PC-9 (cell line): ENCODE measurements at regions of chr7 and their contacts with region 1.

Region 1: DNA sequence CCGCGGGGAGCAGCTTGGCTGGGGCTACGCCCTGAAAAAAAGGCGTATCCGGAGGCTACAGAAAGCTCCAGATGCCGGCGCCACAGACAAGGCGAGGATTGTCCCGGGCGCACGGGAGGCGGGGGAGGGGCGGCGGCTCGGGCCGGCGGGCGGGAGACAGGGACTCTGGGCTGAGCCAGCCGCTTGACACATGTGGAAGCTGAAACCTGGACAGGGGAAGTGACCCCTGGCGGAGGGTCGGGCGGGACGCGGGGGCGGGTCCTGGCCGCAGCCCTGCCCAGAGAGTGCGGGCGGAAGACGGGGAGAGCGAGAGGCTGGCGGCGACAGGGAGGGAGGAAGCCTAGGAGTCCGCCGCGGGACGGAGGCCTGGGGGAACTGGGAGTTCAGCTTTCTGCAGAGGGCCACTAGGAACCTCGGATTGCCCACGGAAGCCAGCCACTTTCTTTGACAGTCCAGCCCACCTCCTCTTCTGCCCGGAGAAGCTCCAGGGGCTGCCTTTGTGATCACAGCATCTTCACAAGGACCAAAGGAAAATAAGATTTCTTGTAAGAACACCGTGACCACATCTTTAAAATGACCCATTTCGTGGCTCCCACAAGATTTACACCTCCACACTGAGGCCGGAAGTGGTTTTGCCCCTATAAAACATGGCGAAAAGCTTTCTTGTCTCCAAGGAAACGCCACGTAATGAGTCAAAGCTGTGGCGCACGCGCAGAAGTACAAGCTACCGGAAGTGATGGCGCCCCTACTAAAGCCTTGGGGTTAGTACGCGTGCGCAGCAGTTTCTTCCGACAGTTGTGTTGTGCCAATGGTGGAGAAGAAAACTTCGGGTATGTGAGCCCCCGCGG is at the starts of genes PLOD3 and ZNHIT1:
- DNase-seq: peak; percentile 92 to 95
- H3K4me3 ChIP-seq: peak within 1 kb of the TSS; percentile 82
- H3K27ac ChIP-seq: peak within 1 kb of the TSS; percentile 80
- H3K4me1 ChIP-seq: 0 out of 2 replicates have a peak, but pooled peaks cover 12% of the 10 kb centered on the region
- H3K27me3 ChIP-seq: no peaks in the 10 kb centered on the region
- CTCF ChIP-seq: no peak
- total RNA-seq, gene PLOD3: 93.2 and 105 TPM in 2 replicates
- total RNA-seq, gene ZNHIT1: 105 and 110 TPM in 2 replicates

Region 2: GRCh38 chr7:100726996-100727761 is 490.4 kb before region 1 on chr7:
- CTCF ChIA-PET with region 1: interaction called, 17 read pairs
- POLR2A ChIA-PET with region 1: no interaction called
- intact Hi-C with region 1: no loop called
- DNase-seq: no peak
- H3K4me3 ChIP-seq: no peak overlapping the region
- H3K27ac ChIP-seq: no peak overlapping the region
- H3K4me1 ChIP-seq: peaks cover 19% of the 10 kb centered on the region
- H3K27me3 ChIP-seq: no peaks in the 10 kb centered on the region
- CTCF ChIP-seq: no peak

Region 3: GRCh38 chr7:101235050-101235449 is 17.4 kb after region 1 on chr7:
- CTCF ChIA-PET with region 1: interaction called, 4 read pairs
- POLR2A ChIA-PET with region 1: interaction called, 61 read pairs
- intact Hi-C with region 1: loop called (anchors 1 kb)
- DNase-seq: no peak
- H3K4me3 ChIP-seq: no peak overlapping the region
- H3K27ac ChIP-seq: no peak overlapping the region
- H3K4me1 ChIP-seq: peaks cover 5% of the 10 kb centered on the region
- H3K27me3 ChIP-seq: no peaks in the 10 kb centered on the region
- CTCF ChIP-seq: peak; percentile 25; the same call in 1 of the 2 replicates

Region 4: GRCh38 chr7:101244375-101245146 is 26.9 kb after region 1 on chr7 and contains the start of gene FIS1:
- CTCF ChIA-PET with region 1: interaction called, 22 read pairs
- POLR2A ChIA-PET with region 1: interaction called, 3 read pairs
- intact Hi-C with region 1: loop called (anchors 1 kb)
- DNase-seq: peak; percentile 74 to 95
- H3K4me3 ChIP-seq: peak within 1 kb of the TSS; percentile 98
- H3K27ac ChIP-seq: peak within 1 kb of the TSS; percentile 52
- H3K4me1 ChIP-seq: peaks cover 16% of the 10 kb centered on the region
- H3K27me3 ChIP-seq: no peaks in the 10 kb centered on the region
- CTCF ChIP-seq: peak; percentile 63
- total RNA-seq, gene FIS1: 184 and 200 TPM in 2 replicates

Region 5: GRCh38 chr7:101251871-101252659 is 34.5 kb after region 1 on chr7:
- CTCF ChIA-PET with region 1: no interaction called
- POLR2A ChIA-PET with region 1: interaction called, 4 read pairs
- intact Hi-C with region 1: loop called (anchors 1 kb)
- DNase-seq: peak; percentile 94 to 100
- H3K4me3 ChIP-seq: peak overlapping the region; percentile 74
- H3K27ac ChIP-seq: peak overlapping the region; percentile 48
- H3K4me1 ChIP-seq: peaks cover 17% of the 10 kb centered on the region
- H3K27me3 ChIP-seq: no peaks in the 10 kb centered on the region
- CTCF ChIP-seq: no peak

Region 6: DNA sequence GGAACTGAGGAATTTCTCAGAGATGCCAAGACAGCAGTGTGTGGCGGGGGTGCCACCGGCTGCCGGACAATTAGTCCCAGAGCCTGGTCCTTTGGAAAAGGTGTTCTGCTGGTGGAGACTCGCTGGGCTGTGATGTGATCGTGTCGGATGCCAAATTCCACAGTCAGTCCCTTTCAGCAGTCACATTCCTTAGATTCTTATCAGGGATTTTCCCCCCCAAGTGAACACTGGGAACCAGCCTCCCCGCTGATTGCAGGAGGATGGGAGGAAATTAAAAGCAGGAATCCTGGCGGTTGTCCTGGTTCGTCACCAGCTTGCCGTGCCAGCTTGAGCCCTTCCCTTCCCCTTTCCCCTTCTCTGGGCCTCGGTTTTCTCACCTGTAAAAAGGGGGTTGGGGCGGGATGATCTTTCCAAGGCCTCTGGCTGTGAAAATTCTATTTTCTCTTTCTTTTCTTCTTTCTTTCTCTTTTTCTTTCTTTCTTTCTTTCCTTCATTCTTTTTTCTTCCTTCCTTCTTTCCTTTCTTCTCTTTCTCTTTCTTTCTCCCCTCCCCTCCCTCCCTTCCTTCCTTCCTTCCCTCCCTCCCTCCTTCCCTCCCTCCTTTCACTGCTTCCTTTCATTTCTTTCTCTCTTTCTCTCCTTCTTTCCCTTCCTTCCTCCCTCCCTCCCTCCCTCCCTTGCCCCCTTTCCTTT is 184.6 kb after region 1 on chr7:
- CTCF ChIA-PET with region 1: no interaction called
- POLR2A ChIA-PET with region 1: no interaction called
- intact Hi-C with region 1: no loop called
- DNase-seq: peak; percentile 71 to 81
- H3K4me3 ChIP-seq: peak overlapping the region; percentile 19; the same call in 1 of the 2 replicates
- H3K27ac ChIP-seq: no peak overlapping the region
- H3K4me1 ChIP-seq: peaks cover 14% of the 10 kb centered on the region
- H3K27me3 ChIP-seq: peaks cover 16% of the 10 kb centered on the region; the same call in 1 of the 2 replicates
- CTCF ChIP-seq: no peak